CD8-positive, alpha-beta T cell (primary cell): ENCODE measurements at regions of chr3 and their contacts with region 1.

Region 1: DNA sequence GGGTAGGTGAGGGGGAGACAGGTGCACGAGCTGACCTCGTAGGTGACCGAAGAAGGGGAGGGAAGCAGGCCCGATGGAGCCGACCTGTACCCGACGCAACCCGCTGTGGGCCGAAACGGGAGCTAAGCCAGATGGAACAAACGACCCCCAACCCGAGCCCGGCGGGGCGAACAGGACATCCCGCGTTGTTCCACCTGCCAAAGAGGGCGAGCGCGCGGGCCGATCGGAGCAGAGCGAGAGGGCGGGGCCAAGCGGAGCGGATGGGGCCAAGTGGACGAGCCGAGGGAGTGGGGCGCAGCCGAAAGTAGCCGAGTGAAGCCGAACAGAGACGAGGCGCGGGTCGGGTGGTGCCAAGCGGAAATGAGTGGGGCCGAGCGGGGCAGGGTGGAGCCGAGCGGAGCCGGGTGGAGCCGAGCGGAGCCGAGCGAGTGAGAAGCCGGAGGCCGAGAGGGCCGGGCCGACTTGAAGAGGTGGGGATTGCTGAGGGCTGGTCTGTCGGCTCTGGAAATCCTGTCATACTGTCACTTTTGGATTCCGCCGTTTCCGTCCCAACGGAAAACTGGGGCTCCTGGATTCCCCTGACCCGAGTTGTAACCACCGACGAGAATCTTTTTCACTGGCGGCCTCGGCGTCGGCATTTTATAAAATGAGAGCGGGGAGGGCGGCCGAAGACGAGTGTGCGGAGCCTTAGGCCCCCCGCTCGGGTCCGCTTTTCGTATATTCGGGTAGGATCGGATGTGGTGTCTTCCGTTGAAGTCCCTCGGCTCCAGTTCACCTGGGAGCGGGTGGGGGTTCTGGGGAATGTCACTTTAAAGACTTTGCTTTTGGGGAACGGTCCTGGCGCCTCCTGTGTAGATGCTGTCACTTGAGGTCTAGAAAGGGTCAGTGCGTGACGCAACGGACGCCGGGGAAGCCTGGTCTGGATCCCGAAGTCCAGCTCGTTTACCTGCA is 15.6 kb upstream of the WNT7A start:
- DNase-seq: peak; percentile 90 to 97 (median 93)
- ATAC-seq: peak; percentile 95
- H3K4me3 ChIP-seq: peak overlapping the region; percentile 70 to 72
- H3K4me3 Mint-ChIP-seq: peak overlapping the region; percentile 88
- H3K27ac ChIP-seq: peak overlapping the region; percentile 71 to 74
- H3K27ac Mint-ChIP-seq: peak overlapping the region; percentile 91
- H3K4me1 ChIP-seq: peaks cover 28% of the 10 kb centered on the region
- H3K4me1 Mint-ChIP-seq: peaks cover 35% of the 10 kb centered on the region
- H3K27me3 ChIP-seq: no peaks in the 10 kb centered on the region
- H3K27me3 Mint-ChIP-seq: no peaks in the 10 kb centered on the region
- CTCF ChIP-seq: no peak

Region 2: GRCh38 chr3:12663936-12664908 is 1231.2 kb before region 1 on chr3 and contains the start of gene RAF1:
- CTCF ChIA-PET with region 1: no interaction called
- POLR2A ChIA-PET with region 1: no interaction called
- intact Hi-C with region 1: loop called in 1 of 2 experiments (anchors 10 kb)
- DNase-seq: peak; percentile 94 to 99 (median 97)
- ATAC-seq: peak; percentile 93
- H3K4me3 ChIP-seq: peak within 1 kb of the TSS; percentile 83 to 93
- H3K4me3 Mint-ChIP-seq: peak within 1 kb of the TSS; percentile 90
- H3K27ac ChIP-seq: peak within 1 kb of the TSS; percentile 96 to 99
- H3K27ac Mint-ChIP-seq: peak within 1 kb of the TSS; percentile 99
- H3K4me1 ChIP-seq: peaks cover 30% of the 10 kb centered on the region
- H3K4me1 Mint-ChIP-seq: peaks cover 34% of the 10 kb centered on the region
- H3K27me3 ChIP-seq: no peaks in the 10 kb centered on the region
- H3K27me3 Mint-ChIP-seq: no peaks in the 10 kb centered on the region
- CTCF ChIP-seq: no peak
- total RNA-seq, gene RAF1: 156 to 159 TPM

Region 3: DNA sequence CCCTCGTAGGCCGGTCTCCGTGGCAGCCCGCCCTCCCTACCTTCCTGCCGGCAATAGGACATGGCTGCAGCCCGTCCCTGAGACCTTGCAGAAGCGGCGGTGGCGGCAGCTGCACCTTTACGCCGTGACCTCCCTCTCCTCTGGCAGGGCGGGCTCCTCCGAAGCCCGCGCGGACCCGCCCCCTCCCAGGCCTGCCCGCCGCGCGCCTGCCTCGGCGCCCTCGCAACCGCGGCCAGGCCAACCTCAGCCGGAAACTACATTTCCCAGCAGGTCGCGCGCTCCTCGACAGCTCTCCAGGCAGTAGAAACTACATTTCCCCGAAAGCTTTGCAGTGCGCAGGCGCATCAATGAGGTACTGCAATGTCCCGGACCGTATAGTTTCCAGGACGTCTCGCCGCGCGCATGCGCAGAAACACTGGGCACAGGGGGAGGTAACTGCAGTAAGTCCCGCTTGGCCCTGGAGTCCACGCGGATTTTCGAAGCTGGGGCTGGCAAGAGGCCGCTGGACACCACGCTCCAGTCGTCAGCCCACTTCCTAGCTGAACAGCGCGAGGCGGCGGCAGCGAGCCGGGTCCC is 229.3 kb after region 1 on chr3 and contains the starts of genes CHCHD4 and TMEM43:
- CTCF ChIA-PET with region 1: interaction called, 8 read pairs
- POLR2A ChIA-PET with region 1: interaction called, 6 read pairs
- intact Hi-C with region 1: loop called (anchors 1 to 2 kb)
- DNase-seq: peak; percentile 95 to 100 (median 98)
- ATAC-seq: peak; percentile 87
- H3K4me3 ChIP-seq: peak within 1 kb of the TSS; percentile 95 to 100
- H3K4me3 Mint-ChIP-seq: peak within 1 kb of the TSS; percentile 96
- H3K27ac ChIP-seq: peak within 1 kb of the TSS; percentile 89 to 92
- H3K27ac Mint-ChIP-seq: peak within 1 kb of the TSS; percentile 93
- H3K4me1 ChIP-seq: peaks cover 30% of the 10 kb centered on the region
- H3K4me1 Mint-ChIP-seq: peaks cover 56% of the 10 kb centered on the region
- H3K27me3 ChIP-seq: no peaks in the 10 kb centered on the region
- H3K27me3 Mint-ChIP-seq: no peaks in the 10 kb centered on the region
- CTCF ChIP-seq: no peak
- total RNA-seq, gene CHCHD4: 0.71 to 1.7 TPM
- total RNA-seq, gene TMEM43: 20.1 to 24.3 TPM

Region 4: DNA sequence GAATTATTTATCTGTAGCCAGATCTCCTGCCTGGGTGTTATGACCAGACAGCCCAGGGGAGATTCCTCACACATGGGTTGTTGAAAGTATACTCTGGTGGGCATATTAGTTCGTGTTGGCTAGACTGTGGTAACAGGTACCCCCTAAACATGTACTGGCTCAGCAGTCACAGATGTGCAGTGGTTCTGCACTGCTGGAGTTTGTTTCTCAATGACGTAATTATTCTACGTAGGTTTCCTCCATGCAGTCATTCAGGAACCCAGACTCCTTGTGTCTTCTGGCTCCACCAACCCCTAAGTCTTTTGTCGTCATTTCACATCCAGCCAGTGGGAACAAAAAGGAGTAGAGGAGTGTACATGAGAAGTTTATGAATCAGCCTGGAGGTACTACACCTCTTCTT is 299.4 kb after region 1 on chr3:
- CTCF ChIA-PET with region 1: no interaction called
- POLR2A ChIA-PET with region 1: no interaction called
- intact Hi-C with region 1: no loop called
- DNase-seq: no peak
- ATAC-seq: no peak
- H3K4me3 ChIP-seq: no peak overlapping the region
- H3K4me3 Mint-ChIP-seq: no peak overlapping the region
- H3K27ac ChIP-seq: no peak overlapping the region
- H3K27ac Mint-ChIP-seq: no peak overlapping the region
- H3K4me1 ChIP-seq: no peaks in the 10 kb centered on the region
- H3K4me1 Mint-ChIP-seq: peaks cover 40% of the 10 kb centered on the region
- H3K27me3 ChIP-seq: no peaks in the 10 kb centered on the region
- H3K27me3 Mint-ChIP-seq: no peaks in the 10 kb centered on the region
- CTCF ChIP-seq: no peak

Region 5: DNA sequence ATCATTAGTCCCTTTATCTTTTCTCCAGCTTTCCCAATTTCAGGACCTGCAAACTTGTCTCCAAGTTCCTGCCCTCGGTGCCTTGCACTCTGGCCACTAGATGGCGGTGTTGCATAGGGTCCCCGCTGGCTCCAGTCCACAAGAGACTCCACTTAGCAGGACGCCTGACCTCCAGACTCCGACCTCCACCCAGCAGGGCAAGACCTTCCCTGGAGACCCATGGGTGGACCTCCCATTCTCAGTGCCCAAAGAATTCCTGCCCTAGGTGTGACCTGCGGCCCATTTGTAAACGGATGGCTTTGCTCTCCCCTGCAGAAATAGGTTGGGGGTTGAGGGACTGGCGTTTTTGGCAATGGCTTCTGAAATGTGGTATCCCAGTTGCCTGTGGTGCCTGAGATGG is 365.8 kb after region 1 on chr3:
- CTCF ChIA-PET with region 1: interaction called, 7 read pairs
- POLR2A ChIA-PET with region 1: no interaction called
- intact Hi-C with region 1: loop called (anchors 1 to 2 kb)
- DNase-seq: peak; percentile 50 to 88 (median 77)
- ATAC-seq: no peak
- H3K4me3 ChIP-seq: no peak overlapping the region
- H3K4me3 Mint-ChIP-seq: no peak overlapping the region
- H3K27ac ChIP-seq: no peak overlapping the region
- H3K27ac Mint-ChIP-seq: no peak overlapping the region
- H3K4me1 ChIP-seq: no peaks in the 10 kb centered on the region
- H3K4me1 Mint-ChIP-seq: no peaks in the 10 kb centered on the region
- H3K27me3 ChIP-seq: no peaks in the 10 kb centered on the region
- H3K27me3 Mint-ChIP-seq: peaks cover 2% of the 10 kb centered on the region
- CTCF ChIP-seq: peak; percentile 100

Region 6: GRCh38 chr3:14301558-14301957 is 406.1 kb after region 1 on chr3:
- CTCF ChIA-PET with region 1: no interaction called
- POLR2A ChIA-PET with region 1: no interaction called
- intact Hi-C with region 1: no loop called
- DNase-seq: no peak
- ATAC-seq: no peak
- H3K4me3 ChIP-seq: no peak overlapping the region
- H3K4me3 Mint-ChIP-seq: no peak overlapping the region
- H3K27ac ChIP-seq: no peak overlapping the region
- H3K27ac Mint-ChIP-seq: no peak overlapping the region
- H3K4me1 ChIP-seq: no peaks in the 10 kb centered on the region
- H3K4me1 Mint-ChIP-seq: peaks cover 6% of the 10 kb centered on the region
- H3K27me3 ChIP-seq: no peaks in the 10 kb centered on the region
- H3K27me3 Mint-ChIP-seq: peaks cover 2% of the 10 kb centered on the region
- CTCF ChIP-seq: no peak

Region 7: GRCh38 chr3:14410503-14411165 is 515.2 kb after region 1 on chr3:
- CTCF ChIA-PET with region 1: no interaction called
- POLR2A ChIA-PET with region 1: no interaction called
- intact Hi-C with region 1: no loop called
- DNase-seq: peak in 1 of 9 experiments; percentile 43
- ATAC-seq: no peak
- H3K4me3 ChIP-seq: no peak overlapping the region
- H3K4me3 Mint-ChIP-seq: no peak overlapping the region
- H3K27ac ChIP-seq: no peak overlapping the region
- H3K27ac Mint-ChIP-seq: no peak overlapping the region
- H3K4me1 ChIP-seq: no peaks in the 10 kb centered on the region
- H3K4me1 Mint-ChIP-seq: peaks cover 30% of the 10 kb centered on the region
- H3K27me3 ChIP-seq: no peaks in the 10 kb centered on the region
- H3K27me3 Mint-ChIP-seq: no peaks in the 10 kb centered on the region
- CTCF ChIP-seq: no peak

Region 8: GRCh38 chr3:14467814-14468620 is 572.6 kb after region 1 on chr3:
- CTCF ChIA-PET with region 1: interaction called, 22 read pairs
- POLR2A ChIA-PET with region 1: no interaction called
- intact Hi-C with region 1: loop called (anchors 1 kb)
- DNase-seq: peak; percentile 17 to 69 (median 48)
- ATAC-seq: peak; percentile 84
- H3K4me3 ChIP-seq: no peak overlapping the region
- H3K4me3 Mint-ChIP-seq: no peak overlapping the region
- H3K27ac ChIP-seq: no peak overlapping the region
- H3K27ac Mint-ChIP-seq: no peak overlapping the region
- H3K4me1 ChIP-seq: no peaks in the 10 kb centered on the region
- H3K4me1 Mint-ChIP-seq: no peaks in the 10 kb centered on the region
- H3K27me3 ChIP-seq: no peaks in the 10 kb centered on the region
- H3K27me3 Mint-ChIP-seq: no peaks in the 10 kb centered on the region
- CTCF ChIP-seq: peak; percentile 87

Region 9: DNA sequence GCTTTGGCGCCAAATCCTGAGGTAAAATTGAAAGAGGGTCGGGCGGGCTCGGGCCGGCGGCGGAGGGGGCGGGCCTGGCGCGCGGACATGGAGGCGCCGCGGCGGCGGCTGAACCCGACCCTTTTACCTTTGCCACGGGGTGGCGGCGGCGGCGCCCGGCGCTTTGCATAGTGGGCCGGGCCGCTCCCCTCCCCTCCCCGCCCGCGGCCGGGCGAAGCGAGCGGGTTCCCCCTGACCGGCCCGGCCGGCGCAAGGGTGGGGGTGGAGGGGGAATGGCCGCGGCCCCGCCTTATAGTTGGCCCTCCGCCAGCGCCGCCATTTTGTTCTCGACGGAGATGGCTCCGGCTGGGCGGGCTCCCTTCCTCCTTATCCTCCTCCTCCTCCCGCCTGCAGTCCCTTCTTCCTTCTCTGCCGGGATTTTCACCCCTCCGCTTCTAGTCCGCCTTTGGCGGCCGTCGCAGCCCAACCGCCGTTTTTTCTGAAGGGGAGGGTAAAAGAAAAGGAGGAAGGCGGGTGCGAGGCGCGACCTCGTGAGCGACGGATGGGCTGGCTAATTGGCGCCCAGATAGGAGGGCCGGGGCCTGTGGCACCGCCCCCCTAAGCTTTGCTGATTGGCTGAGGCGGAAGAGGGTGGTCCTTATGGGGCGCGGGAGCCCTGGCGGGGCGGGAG is 1052.6 kb after region 1 on chr3:
- CTCF ChIA-PET with region 1: no interaction called
- POLR2A ChIA-PET with region 1: no interaction called
- intact Hi-C with region 1: loop called in 1 of 2 experiments (anchors 1 kb)
- DNase-seq: peak; percentile 92 to 98 (median 95)
- ATAC-seq: peak; percentile 88
- H3K4me3 ChIP-seq: peak overlapping the region; percentile 98 to 99
- H3K4me3 Mint-ChIP-seq: peak overlapping the region; percentile 99
- H3K27ac ChIP-seq: peak overlapping the region; percentile 97 to 99
- H3K27ac Mint-ChIP-seq: peak overlapping the region; percentile 100
- H3K4me1 ChIP-seq: peaks cover 22% of the 10 kb centered on the region
- H3K4me1 Mint-ChIP-seq: peaks cover 70% of the 10 kb centered on the region
- H3K27me3 ChIP-seq: no peaks in the 10 kb centered on the region
- H3K27me3 Mint-ChIP-seq: no peaks in the 10 kb centered on the region
- CTCF ChIP-seq: no peak